GM12878 (cell line): ENCODE measurements at regions of chr4 and their contacts with region 1.

Region 1: DNA sequence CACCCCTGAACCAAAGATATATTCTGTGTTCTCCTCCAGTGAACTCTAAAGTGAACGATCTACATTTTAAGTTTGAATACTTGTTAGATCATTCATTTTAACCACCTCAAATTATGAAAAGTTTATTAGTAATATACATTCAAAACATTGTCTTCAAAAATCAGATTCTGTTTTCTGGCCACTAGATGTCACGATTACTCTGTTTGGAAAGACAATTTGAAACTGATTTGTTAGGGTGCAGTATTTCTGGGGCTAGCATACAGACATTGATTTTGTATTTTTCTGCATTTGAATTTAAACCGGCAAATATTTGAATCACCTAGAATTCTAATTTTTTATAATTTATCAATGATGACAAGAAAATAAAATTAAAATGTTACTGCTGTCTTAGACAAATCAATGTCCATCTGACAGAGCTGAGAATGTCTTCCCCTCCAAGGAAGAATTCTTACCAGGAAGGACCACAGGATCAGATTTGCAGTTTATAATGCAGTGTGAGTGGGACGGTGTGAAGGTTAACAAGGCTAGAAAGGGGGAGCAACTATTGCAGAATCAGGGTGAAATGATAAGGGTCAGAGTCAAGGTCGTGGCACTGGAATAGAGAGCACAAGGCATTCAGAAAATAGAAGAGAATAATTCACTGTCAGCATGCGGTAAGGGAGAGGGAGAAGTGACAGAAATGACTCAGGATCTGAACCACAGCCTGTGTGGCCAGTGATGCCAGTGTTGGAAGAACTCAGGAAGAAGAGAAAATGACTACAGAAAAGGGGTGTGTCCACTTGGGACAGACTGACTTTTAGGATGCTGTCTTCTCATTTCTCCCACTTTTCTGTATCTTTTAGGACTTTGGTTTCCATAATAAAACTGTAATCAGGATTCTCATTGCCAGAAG is 91.6 kb downstream of the ANXA10 start:
- DNase-seq: peak; percentile 12
- ATAC-seq: peak; percentile 63
- H3K4me3 ChIP-seq: no peak overlapping the region
- H3K27ac ChIP-seq: no peak overlapping the region
- H3K4me1 ChIP-seq: 0 out of 2 replicates have a peak, but pooled peaks cover 3% of the 10 kb centered on the region
- H3K27me3 ChIP-seq: no peaks in the 10 kb centered on the region
- CTCF ChIP-seq: peak; percentile 33 to 61 (median 47); a peak in 5 of 6 replicates
- EP300 ChIP-seq: no peak
- POLR2A ChIP-seq: no peak
- RAD21 ChIP-seq: peak; percentile 80

Region 2: DNA sequence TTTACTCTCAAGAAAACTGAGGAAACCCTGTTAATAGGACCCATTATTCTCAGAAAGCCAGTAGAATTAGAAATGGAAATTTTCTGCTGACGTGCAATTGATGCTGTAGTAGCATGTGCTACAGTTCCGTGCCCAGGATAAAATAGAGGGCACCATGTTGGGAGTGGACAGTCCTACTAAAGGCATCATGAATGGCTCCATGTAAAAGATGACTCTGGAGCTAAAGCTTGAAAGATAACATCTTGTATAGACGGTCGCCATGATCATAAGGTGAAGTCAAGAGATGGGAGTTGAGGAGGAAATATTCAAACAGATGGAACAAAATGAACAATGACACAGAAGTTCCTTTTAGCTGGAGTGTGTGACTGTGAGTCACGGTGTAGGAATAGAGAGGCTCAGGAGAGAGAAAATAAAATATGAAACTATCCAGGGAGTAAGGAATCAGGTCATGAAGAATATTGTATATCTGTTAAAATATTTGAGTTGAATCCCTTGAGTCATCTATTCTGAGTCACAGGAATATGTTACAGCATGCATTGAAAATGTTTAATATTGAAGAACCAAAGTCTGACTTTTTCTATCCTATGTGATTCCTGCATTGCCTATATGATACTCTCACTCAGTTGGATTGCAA is 59.8 kb before region 1 on chr4:
- CTCF ChIA-PET with region 1: no interaction called
- POLR2A ChIA-PET with region 1: no interaction called
- RAD21 ChIA-PET with region 1: no interaction called
- SMC1A ChIA-PET with region 1: no interaction called
- in situ Hi-C with region 1: no loop called
- intact Hi-C with region 1: no loop called
- DNase-seq: no peak
- ATAC-seq: no peak
- H3K4me3 ChIP-seq: no peak overlapping the region
- H3K27ac ChIP-seq: no peak overlapping the region
- H3K4me1 ChIP-seq: no peaks in the 10 kb centered on the region
- H3K27me3 ChIP-seq: no peaks in the 10 kb centered on the region
- CTCF ChIP-seq: no peak
- EP300 ChIP-seq: no peak
- POLR2A ChIP-seq: no peak
- RAD21 ChIP-seq: no peak

Region 3: GRCh38 chr4:168514249-168514852 is 330.4 kb after region 1 on chr4:
- CTCF ChIA-PET with region 1: interaction called, 7 read pairs
- POLR2A ChIA-PET with region 1: no interaction called
- RAD21 ChIA-PET with region 1: no interaction called
- SMC1A ChIA-PET with region 1: interaction called, 3 read pairs
- in situ Hi-C with region 1: no loop called
- intact Hi-C with region 1: loop called (anchors 2 kb)
- DNase-seq: no peak
- ATAC-seq: 0 out of 3 replicates have a peak, but pooled peaks have one; percentile 20
- H3K4me3 ChIP-seq: no peak overlapping the region
- H3K27ac ChIP-seq: no peak overlapping the region
- H3K4me1 ChIP-seq: no peaks in the 10 kb centered on the region
- H3K27me3 ChIP-seq: no peaks in the 10 kb centered on the region
- CTCF ChIP-seq: peak in 2 of 3 experiments; percentile 20 to 26; a peak in 2 of 6 replicates
- EP300 ChIP-seq: no peak
- POLR2A ChIP-seq: no peak
- RAD21 ChIP-seq: 0 out of 2 replicates have a peak, but pooled peaks have one; percentile 13

Region 4: DNA sequence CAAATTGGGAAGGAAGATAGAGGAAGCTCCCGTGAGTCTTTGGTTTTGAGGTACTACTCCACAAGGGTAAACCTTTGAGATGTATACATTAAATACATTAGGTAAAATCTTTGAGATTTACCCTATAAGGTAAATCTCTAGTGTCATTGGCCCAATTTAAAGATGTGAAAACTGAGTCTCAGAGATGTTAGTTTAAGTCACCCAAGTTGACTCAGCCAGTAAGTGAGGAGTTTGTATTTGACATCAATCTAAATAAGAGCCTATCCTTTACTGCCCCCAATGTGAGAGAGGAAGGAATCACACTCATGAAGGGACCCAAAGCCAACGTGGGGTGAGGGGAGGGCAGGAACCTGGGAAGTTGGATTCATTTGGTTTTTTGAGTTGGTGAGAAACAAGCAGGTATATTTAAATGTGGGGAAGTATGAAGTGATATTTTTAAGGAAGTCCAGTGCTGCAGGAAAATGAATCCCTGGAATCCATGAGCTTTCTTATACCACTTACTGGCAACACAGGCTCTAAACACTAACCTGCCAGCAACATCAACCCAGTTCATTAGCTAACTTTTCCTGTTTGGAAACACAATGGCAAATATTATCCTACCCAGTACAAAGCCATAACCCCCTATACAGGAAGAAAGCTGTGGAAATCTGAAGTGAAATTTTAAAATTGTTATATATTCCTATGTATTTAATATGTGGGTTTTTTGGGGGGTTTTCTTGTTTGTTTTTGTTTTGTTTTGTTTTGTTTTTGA is 368.2 kb after region 1 on chr4:
- CTCF ChIA-PET with region 1: interaction called, 5 read pairs
- POLR2A ChIA-PET with region 1: no interaction called
- RAD21 ChIA-PET with region 1: interaction called, 3 read pairs
- SMC1A ChIA-PET with region 1: interaction called, 3 read pairs
- in situ Hi-C with region 1: no loop called
- intact Hi-C with region 1: loop called (anchors 10 kb)
- DNase-seq: no peak
- ATAC-seq: peak; percentile 61
- H3K4me3 ChIP-seq: no peak overlapping the region
- H3K27ac ChIP-seq: no peak overlapping the region
- H3K4me1 ChIP-seq: no peaks in the 10 kb centered on the region
- H3K27me3 ChIP-seq: no peaks in the 10 kb centered on the region
- CTCF ChIP-seq: peak in 1 of 3 experiments; percentile 24; a peak in 1 of 6 replicates
- EP300 ChIP-seq: no peak
- POLR2A ChIP-seq: no peak
- RAD21 ChIP-seq: 0 out of 2 replicates have a peak, but pooled peaks have one; percentile 13

Region 5: DNA sequence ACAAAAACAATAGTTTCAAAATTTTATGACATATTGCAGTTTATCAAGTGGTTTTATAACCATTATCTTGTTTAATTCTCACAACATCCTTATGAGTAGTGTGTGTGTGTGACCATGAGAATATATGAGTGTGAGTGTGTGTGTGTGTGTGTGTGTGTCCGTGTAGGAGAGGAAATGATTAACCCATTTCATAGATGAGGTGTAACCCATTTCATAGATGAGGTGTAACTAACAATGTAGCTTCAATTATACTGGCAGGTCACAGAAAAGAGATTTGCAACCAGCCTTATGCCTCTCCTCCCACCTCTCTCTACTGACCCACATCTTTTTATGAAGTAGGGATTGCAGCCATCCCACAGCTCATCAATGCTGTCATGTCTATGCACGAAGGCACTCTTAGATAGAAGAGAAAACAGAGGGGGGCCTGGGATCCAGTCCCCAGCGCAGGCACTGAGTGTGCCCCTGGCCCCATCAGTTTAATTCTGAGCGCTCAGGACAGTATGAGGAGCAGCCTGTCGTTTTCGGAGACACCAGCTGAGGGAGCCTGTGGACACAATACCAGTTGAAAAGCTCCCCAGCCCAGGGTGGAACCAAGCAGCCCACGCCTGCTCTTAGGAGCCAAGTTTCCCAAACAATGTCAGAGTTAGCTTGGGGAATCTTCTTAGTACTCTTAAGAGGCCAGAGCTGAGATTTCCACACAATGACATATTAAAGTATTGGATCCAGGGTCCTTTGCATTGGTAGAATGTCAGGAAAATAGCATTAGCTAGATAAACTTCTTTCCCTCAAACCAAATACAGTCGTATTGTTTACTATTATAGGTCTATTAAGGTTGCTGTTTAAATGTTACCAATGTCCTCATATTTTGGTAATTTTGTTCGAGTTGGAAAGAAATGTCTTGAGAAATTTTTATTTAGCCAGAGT is 401.5 kb after region 1 on chr4:
- CTCF ChIA-PET with region 1: interaction called, 8 read pairs
- POLR2A ChIA-PET with region 1: no interaction called
- RAD21 ChIA-PET with region 1: interaction called, 4 read pairs
- SMC1A ChIA-PET with region 1: interaction called, 3 read pairs
- in situ Hi-C with region 1: no loop called
- intact Hi-C with region 1: loop called (anchors 10 kb)
- DNase-seq: no peak
- ATAC-seq: peak; percentile 98
- H3K4me3 ChIP-seq: no peak overlapping the region
- H3K27ac ChIP-seq: no peak overlapping the region
- H3K4me1 ChIP-seq: no peaks in the 10 kb centered on the region
- H3K27me3 ChIP-seq: no peaks in the 10 kb centered on the region
- CTCF ChIP-seq: peak; percentile 38 to 63 (median 63); a peak in 5 of 6 replicates
- EP300 ChIP-seq: no peak
- POLR2A ChIP-seq: no peak
- RAD21 ChIP-seq: peak; percentile 47

Region 6: GRCh38 chr4:168917138-168917779 is 733.3 kb after region 1 on chr4:
- CTCF ChIA-PET with region 1: interaction called, 14 read pairs
- POLR2A ChIA-PET with region 1: no interaction called
- RAD21 ChIA-PET with region 1: interaction called, 12 read pairs
- SMC1A ChIA-PET with region 1: interaction called, 5 read pairs
- in situ Hi-C with region 1: loop called (anchors 5 kb)
- intact Hi-C with region 1: loop called (anchors 1 kb)
- DNase-seq: no peak
- ATAC-seq: peak; percentile 80
- H3K4me3 ChIP-seq: no peak overlapping the region
- H3K27ac ChIP-seq: no peak overlapping the region
- H3K4me1 ChIP-seq: no peaks in the 10 kb centered on the region
- H3K27me3 ChIP-seq: no peaks in the 10 kb centered on the region
- CTCF ChIP-seq: peak; percentile 37 to 52 (median 41); a peak in 4 of 6 replicates
- EP300 ChIP-seq: no peak
- POLR2A ChIP-seq: no peak
- RAD21 ChIP-seq: peak; percentile 69

Region 7: GRCh38 chr4:169010125-169011023 is 826.4 kb after region 1 on chr4 and contains the start of gene CBR4:
- CTCF ChIA-PET with region 1: no interaction called
- POLR2A ChIA-PET with region 1: no interaction called
- RAD21 ChIA-PET with region 1: interaction called, 4 read pairs
- SMC1A ChIA-PET with region 1: interaction called, 4 read pairs
- in situ Hi-C with region 1: no loop called
- intact Hi-C with region 1: loop called (anchors 5 kb)
- DNase-seq: peak; percentile 94
- ATAC-seq: peak; percentile 96
- H3K4me3 ChIP-seq: peak within 1 kb of the TSS; percentile 86
- H3K27ac ChIP-seq: peak within 1 kb of the TSS; percentile 91
- H3K4me1 ChIP-seq: no peaks in the 10 kb centered on the region
- H3K27me3 ChIP-seq: no peaks in the 10 kb centered on the region
- CTCF ChIP-seq: peak; percentile 6 to 36 (median 35); a peak in 2 of 6 replicates
- EP300 ChIP-seq: no peak; a peak in 1 of 4 replicates
- POLR2A ChIP-seq: peak; percentile 86
- RAD21 ChIP-seq: 0 out of 2 replicates have a peak, but pooled peaks have one; percentile 11
- polyA plus RNA-seq, gene CBR4: 21.4 to 36.2 TPM

Region 8: DNA sequence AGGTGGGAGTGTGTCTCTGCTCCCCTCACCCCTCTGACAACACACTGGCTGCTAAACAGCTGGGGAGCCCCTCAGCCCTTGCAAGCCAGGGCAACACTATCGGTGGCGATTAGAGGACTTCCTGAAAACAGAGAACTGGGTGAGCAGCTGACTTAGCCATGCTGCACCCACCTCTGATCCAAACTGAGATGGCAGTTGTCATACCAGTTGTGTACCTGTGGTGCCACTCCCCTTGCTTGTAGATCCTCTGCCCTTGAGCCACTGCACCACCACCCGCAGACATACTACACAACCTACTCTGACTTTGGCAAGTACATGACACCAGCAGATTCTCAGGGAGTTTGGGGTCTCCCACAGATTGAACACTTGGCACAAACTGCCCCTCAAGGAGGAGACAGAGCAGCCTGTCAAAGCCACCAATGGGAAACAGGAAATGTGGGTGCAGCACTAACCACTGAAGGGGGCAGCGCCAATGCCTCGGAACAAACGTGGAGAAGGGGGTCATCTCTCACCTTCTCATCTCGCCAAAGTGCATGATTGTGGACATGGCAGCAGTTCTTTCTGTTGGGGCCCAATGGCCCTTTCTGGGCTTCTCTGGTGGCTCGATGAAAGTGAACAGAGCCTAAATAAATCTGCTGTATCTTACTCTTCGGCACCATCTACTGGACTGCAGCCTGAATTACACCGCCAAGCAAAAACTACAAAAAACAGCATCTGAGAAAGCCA is 1308.6 kb after region 1 on chr4:
- CTCF ChIA-PET with region 1: no interaction called
- POLR2A ChIA-PET with region 1: no interaction called
- RAD21 ChIA-PET with region 1: no interaction called
- SMC1A ChIA-PET with region 1: no interaction called
- in situ Hi-C with region 1: no loop called
- intact Hi-C with region 1: loop called (anchors 5 kb)
- DNase-seq: peak; percentile 13
- ATAC-seq: peak; percentile 74
- H3K4me3 ChIP-seq: no peak overlapping the region
- H3K27ac ChIP-seq: no peak overlapping the region
- H3K4me1 ChIP-seq: no peaks in the 10 kb centered on the region
- H3K27me3 ChIP-seq: no peaks in the 10 kb centered on the region
- CTCF ChIP-seq: peak; percentile 57 to 68 (median 67)
- EP300 ChIP-seq: no peak
- POLR2A ChIP-seq: no peak
- RAD21 ChIP-seq: peak; percentile 71